Activated naive CD8-positive, alpha-beta T cell treated with anti-CD3 and anti-CD28 coated beads, Interleukin-2, amount 10 ng/mL, durations not matched to agents 7 days and 5 days (primary cell): ENCODE measurements at regions of chr22 and their contacts with region 1.

Region 1: DNA sequence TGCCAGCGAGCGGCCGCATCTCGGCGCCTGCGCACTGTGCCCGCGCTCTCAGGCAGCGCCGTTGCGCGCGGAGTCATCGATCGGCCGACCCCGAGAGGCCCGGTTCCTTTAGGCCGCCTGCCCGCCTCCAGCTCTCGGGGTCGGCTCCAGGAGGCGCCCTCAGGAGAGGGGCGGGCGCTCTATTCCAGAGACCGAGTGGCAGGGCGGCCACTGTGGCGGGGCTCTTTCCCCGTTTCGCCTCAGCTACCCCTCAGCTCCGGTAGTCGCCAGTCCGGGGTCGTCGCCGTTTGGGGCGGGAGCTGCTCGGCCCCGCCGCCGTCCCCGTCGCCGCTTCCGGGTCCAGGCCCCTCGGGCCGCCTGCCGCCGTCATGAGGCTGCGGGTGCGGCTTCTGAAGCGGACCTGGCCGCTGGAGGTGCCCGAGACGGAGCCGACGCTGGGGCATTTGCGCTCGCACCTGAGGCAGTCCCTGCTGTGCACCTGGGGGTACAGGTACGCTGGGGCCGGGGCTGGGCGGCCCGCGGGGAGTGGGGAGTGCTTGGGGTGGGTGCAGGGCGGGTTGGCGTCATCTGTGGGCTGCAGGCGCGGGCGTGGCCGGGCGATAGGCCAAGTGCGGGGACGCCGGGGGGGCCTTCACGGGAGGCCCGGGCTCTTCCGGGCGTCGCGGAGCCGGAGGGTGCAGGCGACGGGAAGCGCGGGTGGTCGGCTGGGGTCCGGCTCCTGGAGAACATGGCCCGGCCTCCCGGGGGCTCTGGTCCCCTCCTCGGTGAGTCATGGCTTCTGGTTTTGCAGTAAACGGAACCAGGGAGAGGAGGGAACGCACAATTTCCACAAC is at the start of gene FBXO7:
- DNase-seq: peak; percentile 92
- ATAC-seq: peak; percentile 87
- H3K4me3 Mint-ChIP-seq: peak within 1 kb of the TSS; percentile 94
- H3K27ac Mint-ChIP-seq: peak within 1 kb of the TSS; percentile 93
- H3K4me1 Mint-ChIP-seq: peaks cover 16% of the 10 kb centered on the region
- H3K27me3 Mint-ChIP-seq: no peaks in the 10 kb centered on the region
- total RNA-seq, gene FBXO7: 93.5 to 101 TPM

Region 2: DNA sequence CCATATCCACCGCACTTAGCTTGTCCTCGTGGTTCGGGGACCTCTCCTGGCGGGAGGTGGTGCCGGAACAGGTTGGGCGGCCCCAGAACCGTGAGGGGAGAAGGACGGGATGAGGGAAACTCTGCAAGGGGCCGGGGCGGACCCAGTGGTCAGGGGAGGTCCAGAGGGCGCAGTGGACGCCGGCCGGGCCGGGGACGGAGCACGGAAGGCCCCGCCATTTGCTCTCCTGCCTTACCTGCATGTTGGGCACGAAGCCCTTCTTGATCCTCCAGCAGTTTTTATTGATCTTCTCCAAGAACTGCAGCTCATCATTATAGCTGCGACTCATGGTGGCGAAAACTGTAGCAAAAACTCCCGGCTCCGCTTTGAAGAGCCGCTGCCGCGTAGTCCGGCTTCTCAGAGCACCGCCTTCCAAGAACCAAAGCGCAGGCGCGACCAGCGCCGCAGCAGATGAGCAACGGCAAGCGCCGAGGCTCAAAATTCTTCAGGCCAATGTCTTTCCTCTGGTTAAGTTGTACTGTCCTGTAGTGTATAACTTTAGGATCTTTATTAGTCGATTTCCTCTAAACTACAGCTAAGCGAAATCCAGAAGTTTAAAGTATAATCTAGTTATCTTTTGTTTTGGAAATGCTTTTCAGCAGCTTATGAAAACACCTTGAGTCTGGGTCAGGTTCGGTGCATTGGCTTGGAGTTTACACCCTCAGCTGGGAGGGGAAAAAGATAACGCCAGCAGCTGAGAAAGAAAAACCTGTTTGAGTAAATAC is 62.8 kb before region 1 on chr22 and contains the start of gene RTCB:
- POLR2A ChIA-PET with region 1: interaction called, 30 read pairs
- DNase-seq: peak; percentile 93
- ATAC-seq: peak; percentile 89
- H3K4me3 Mint-ChIP-seq: peak within 1 kb of the TSS; percentile 95
- H3K27ac Mint-ChIP-seq: peak within 1 kb of the TSS; percentile 93
- H3K4me1 Mint-ChIP-seq: peaks cover 43% of the 10 kb centered on the region
- H3K27me3 Mint-ChIP-seq: peaks cover 3% of the 10 kb centered on the region
- total RNA-seq, gene RTCB: 53.0 to 57.2 TPM

Region 3: GRCh38 chr22:32557444-32557843 is 82.6 kb after region 1 on chr22:
- POLR2A ChIA-PET with region 1: no interaction called
- DNase-seq: no peak
- ATAC-seq: no peak
- H3K4me3 Mint-ChIP-seq: no peak overlapping the region
- H3K27ac Mint-ChIP-seq: no peak overlapping the region
- H3K4me1 Mint-ChIP-seq: no peaks in the 10 kb centered on the region
- H3K27me3 Mint-ChIP-seq: peaks cover 13% of the 10 kb centered on the region